ENCODE measurements at regions of chr6 and their contacts with region 1.

Region 1: GRCh38 chr6:61869632-61870400 is 416.2 kb downstream of the KHDRBS2 start:
- DNase-seq: no peak
- H3K4me3 ChIP-seq: no peak overlapping the region
- H3K27ac ChIP-seq: no peak overlapping the region
- H3K4me1 ChIP-seq: no peaks in the 10 kb centered on the region
- H3K27me3 ChIP-seq: no peaks in the 10 kb centered on the region
- CTCF ChIP-seq: no peak

Region 2: GRCh38 chr6:61977947-61978346 is 108.1 kb after region 1 on chr6:
- CTCF ChIA-PET with region 1: no interaction called
- dilution Hi-C with region 1: loop called (anchors 5 kb)
- in situ Hi-C with region 1: no loop called
- intact Hi-C with region 1: no loop called
- DNase-seq: no peak
- H3K4me3 ChIP-seq: no peak overlapping the region
- H3K27ac ChIP-seq: no peak overlapping the region
- H3K4me1 ChIP-seq: no peaks in the 10 kb centered on the region
- H3K27me3 ChIP-seq: no peaks in the 10 kb centered on the region
- CTCF ChIP-seq: no peak